ENCODE measurements at regions of chr2 and their contacts with region 1.

Region 1: GRCh38 chr2:209900638-209901037 is 101.8 kb upstream of the RPE start:
- DNase-seq: no peak
- H3K4me3 ChIP-seq: no peak overlapping the region
- H3K27ac ChIP-seq: no peak overlapping the region
- H3K4me1 ChIP-seq: no peaks in the 10 kb centered on the region
- H3K27me3 ChIP-seq: no peaks in the 10 kb centered on the region
- CTCF ChIP-seq: no peak
- POLR2A ChIP-seq: no peak

Region 2: DNA sequence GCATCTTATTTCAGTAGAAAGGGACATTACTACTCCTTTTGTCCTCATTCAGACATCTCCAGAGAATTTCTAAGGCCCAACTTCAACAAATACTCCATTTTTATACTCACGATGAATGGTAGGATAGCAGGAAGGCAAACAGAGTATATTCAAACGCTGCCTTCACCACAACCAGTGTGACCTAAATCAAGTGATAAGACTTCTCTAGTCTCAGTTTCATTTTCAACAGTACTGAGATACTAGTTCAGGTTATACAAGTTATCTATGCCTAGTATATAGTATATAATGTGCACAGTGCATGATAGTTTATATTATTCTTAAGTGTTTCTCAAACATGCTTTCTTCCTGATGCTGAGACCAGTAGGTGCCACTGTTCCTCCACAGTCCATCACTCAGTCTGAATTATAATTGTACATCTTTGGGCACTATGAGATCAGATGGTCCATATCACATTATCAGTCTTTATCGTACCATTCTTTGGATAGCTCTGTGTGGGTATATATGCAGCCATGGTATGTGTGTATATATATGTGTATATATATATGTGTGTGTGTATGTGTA is 35.5 kb after region 1 on chr2:
- intact Hi-C with region 1: loop called (anchors 2 kb)
- DNase-seq: no peak
- H3K4me3 ChIP-seq: no peak overlapping the region
- H3K27ac ChIP-seq: no peak overlapping the region
- H3K4me1 ChIP-seq: no peaks in the 10 kb centered on the region
- H3K27me3 ChIP-seq: no peaks in the 10 kb centered on the region
- CTCF ChIP-seq: no peak
- POLR2A ChIP-seq: no peak

Region 3: GRCh38 chr2:210002158-210003157 is 101.8 kb after region 1 on chr2 and contains the start of gene RPE:
- intact Hi-C with region 1: no loop called
- DNase-seq: peak; percentile 90 to 95
- H3K4me3 ChIP-seq: peak within 1 kb of the TSS; percentile 67 to 90 (median 79)
- H3K27ac ChIP-seq: peak within 1 kb of the TSS; percentile 70 to 80
- H3K4me1 ChIP-seq: peaks cover 0 to 9% of the 10 kb centered on the region in 2 donors
- H3K27me3 ChIP-seq: no peaks in the 10 kb centered on the region
- CTCF ChIP-seq: no peak
- POLR2A ChIP-seq: no peak
- total RNA-seq, gene RPE: 48.8 to 68.2 (median 55.4) TPM